Panc1 (cell line): ENCODE measurements at regions of chr4 and their contacts with region 1.

Region 1: DNA sequence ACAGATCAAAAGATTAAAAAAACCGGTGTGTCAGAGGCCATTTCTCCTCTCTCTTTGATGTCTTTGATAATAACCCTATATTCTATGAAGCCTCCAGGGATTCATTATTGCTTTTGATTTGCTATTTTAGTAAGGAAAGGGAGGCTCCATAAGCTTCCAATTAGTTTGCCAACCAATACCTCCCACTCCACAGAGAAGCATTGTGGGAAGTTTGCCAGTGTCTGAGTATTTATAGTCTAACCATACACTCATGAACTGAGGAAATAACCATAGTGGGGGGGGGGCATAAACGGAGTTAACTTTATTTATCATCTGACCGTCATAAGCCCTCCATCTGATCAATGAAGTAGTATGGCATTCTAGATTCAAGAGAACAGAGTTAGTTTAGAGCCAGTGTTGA is 1066.8 kb upstream of the PABPC4L start:
- DNase-seq: no peak
- ATAC-seq: no peak
- H3K4me3 ChIP-seq: no peak overlapping the region
- H3K27ac ChIP-seq: no peak overlapping the region
- H3K4me1 ChIP-seq: no peaks in the 10 kb centered on the region
- H3K27me3 ChIP-seq: no peaks in the 10 kb centered on the region
- CTCF ChIP-seq: no peak

Region 2: DNA sequence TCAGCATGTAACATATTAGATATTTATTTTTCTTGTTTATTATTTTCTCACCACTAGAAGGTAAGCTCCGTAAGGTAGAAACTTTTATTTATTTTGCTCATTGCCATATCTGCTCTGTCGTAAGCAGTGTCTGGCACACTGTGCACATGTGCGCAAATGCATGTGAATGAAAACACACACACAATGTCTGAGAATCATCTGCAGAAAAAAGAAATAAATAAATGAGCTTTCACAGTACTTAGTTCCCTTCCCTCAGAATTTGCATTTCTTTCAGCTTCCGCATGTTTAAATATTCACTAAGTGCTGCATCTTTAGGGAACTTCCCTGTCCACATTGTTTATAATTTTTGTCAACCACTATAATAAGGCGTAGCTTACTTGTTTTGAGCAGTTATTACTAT is 103.8 kb before region 1 on chr4:
- CTCF ChIA-PET with region 1: interaction called, 11 read pairs
- POLR2A ChIA-PET with region 1: no interaction called
- in situ Hi-C with region 1: no loop called
- intact Hi-C with region 1: no loop called
- DNase-seq: no peak
- ATAC-seq: no peak
- H3K4me3 ChIP-seq: no peak overlapping the region
- H3K27ac ChIP-seq: no peak overlapping the region
- H3K4me1 ChIP-seq: no peaks in the 10 kb centered on the region
- H3K27me3 ChIP-seq: no peaks in the 10 kb centered on the region
- CTCF ChIP-seq: no peak